PC-3 (cell line): ENCODE measurements at regions of chr10 and their contacts with region 1.

Region 1: GRCh38 chr10:60572511-60573194 is 183.0 kb upstream of the ANK3 start:
- DNase-seq: peak; percentile 95
- ATAC-seq: peak; percentile 84
- H3K4me3 ChIP-seq: peak overlapping the region; percentile 70
- H3K27ac ChIP-seq: peak overlapping the region; percentile 48
- H3K4me1 ChIP-seq: peaks cover 65% of the 10 kb centered on the region
- H3K27me3 ChIP-seq: no peaks in the 10 kb centered on the region
- CTCF ChIP-seq: 0 out of 2 replicates have a peak, but pooled peaks have one; percentile 11

Region 2: GRCh38 chr10:60611291-60611747 is 38.7 kb after region 1 on chr10:
- CTCF ChIA-PET with region 1: no interaction called
- POLR2A ChIA-PET with region 1: no interaction called
- intact Hi-C with region 1: loop called (anchors 1 kb)
- DNase-seq: peak; percentile 99
- ATAC-seq: peak; percentile 99
- H3K4me3 ChIP-seq: peak overlapping the region; percentile 58
- H3K27ac ChIP-seq: peak overlapping the region; percentile 14; the same call in 1 of the 2 replicates
- H3K4me1 ChIP-seq: peaks cover 33% of the 10 kb centered on the region
- H3K27me3 ChIP-seq: no peaks in the 10 kb centered on the region
- CTCF ChIP-seq: no peak

Region 3: DNA sequence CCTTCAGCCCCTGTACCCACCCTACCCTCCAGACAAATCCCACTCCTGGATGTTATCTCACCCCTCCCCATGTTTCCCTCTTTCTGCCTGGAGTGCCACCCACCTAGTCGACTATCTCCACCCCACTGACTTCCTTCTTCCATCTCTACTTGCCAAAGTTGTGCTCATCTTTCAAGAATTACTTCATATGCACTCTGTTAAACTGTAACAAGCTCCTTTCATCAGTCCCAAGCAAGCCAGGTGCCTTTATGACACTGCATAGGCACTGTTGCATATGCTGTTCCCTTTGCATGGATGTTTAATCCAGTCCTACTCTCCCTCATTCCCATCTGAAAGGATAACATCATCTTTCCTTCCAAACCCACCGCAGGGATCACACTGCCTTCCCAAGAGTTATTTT is 196.8 kb after region 1 on chr10:
- CTCF ChIA-PET with region 1: no interaction called
- POLR2A ChIA-PET with region 1: no interaction called
- intact Hi-C with region 1: loop called (anchors 5 kb)
- DNase-seq: no peak
- ATAC-seq: no peak
- H3K4me3 ChIP-seq: no peak overlapping the region
- H3K27ac ChIP-seq: no peak overlapping the region
- H3K4me1 ChIP-seq: no peaks in the 10 kb centered on the region
- H3K27me3 ChIP-seq: no peaks in the 10 kb centered on the region
- CTCF ChIP-seq: no peak